Dorsolateral prefrontal cortex (tissue), 120 donors: ENCODE measurements at regions of chr9 and their contacts with region 1.

Region 1: DNA sequence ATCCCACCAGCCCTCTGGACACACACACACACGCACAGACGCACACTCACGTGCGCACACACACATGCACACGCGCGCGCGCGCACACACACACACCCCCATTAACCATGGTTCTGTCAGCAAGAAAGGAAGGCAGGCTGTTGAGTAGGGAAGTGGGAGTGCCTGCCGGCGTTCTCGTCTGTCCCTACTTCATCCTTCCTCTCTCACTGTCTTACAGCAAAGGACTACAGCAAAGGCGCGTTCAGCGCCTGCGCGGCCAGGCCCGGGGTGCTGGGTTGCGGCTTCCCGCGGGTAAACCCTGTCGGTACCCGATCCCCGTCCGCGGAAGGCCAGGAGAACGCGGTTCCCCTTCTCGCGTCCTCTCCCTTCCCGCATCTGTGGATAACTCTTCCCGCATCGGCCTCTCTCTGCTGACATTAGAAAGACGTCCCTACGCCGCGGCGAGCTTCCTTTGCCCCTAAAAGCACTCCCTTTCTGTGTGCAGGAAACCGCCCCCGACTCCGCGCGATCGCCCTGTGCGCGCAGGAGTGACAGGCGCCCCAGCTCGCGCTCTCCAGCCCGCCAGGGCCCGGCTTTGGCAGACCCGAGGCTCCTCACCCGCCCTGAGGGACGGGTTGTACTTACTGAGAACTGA is 219.2 kb downstream of the AGTPBP1 start:
- DNase-seq: peak in 9 of 10 donors; percentile 34 to 80 (median 61)
- H3K4me3 ChIP-seq: peak overlapping the region in 58 of 59 donors; percentile 17 to 68 (median 52)
- H3K27ac ChIP-seq: peak overlapping the region; percentile 59 to 100 (median 98)
- H3K27me3 ChIP-seq: no peaks in the 10 kb centered on the region
- CTCF ChIP-seq: no peak

Region 2: GRCh38 chr9:85024374-85024773 is 498.2 kb before region 1 on chr9:
- intact Hi-C with region 1: loop called in 1 of 2 experiments (anchors 10 kb)
- DNase-seq: peak in 3 of 10 donors; percentile 33 to 67 (median 46)
- H3K4me3 ChIP-seq: no peak overlapping the region
- H3K27ac ChIP-seq: peak overlapping the region in 50 of 59 donors; percentile 0 to 73 (median 47)
- H3K27me3 ChIP-seq: no peaks in the 10 kb centered on the region
- CTCF ChIP-seq: peak in 52 of 56 donors; percentile 17 to 73 (median 48)

Region 3: DNA sequence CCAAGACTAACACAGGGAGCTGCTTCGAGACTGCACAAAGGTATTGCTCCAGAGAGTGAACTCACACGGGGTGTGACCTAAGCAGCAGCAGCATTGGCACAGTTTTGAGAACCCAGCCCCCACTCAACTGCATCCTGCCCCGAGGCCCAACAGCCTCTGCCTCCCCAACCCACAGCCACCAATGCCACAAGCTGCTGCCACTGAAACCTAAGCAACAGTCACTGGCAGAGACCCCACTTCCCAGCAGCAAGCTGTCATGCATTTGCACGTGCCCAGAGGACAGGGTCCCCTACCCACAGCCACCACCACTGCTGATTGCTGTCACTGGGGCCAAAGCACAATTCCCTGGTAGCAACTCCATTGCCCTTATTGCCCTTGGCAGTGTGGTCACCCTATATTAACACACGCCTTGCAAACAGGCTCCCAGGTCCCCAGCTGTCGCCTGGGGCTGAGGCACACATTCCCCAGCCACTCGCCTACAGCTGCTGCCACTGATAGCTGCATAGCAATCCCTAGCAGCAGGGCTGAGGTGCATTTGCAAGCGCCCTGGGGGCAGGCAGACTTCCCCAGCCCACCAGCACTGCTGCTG is 78.2 kb after region 1 on chr9:
- intact Hi-C with region 1: loop called in 1 of 2 experiments (anchors 5 kb)
- DNase-seq: no peak
- H3K4me3 ChIP-seq: no peak overlapping the region
- H3K27ac ChIP-seq: peak overlapping the region in 32 of 59 donors; percentile 3 to 70 (median 21)
- H3K27me3 ChIP-seq: no peaks in the 10 kb centered on the region
- CTCF ChIP-seq: no peak

Region 4: DNA sequence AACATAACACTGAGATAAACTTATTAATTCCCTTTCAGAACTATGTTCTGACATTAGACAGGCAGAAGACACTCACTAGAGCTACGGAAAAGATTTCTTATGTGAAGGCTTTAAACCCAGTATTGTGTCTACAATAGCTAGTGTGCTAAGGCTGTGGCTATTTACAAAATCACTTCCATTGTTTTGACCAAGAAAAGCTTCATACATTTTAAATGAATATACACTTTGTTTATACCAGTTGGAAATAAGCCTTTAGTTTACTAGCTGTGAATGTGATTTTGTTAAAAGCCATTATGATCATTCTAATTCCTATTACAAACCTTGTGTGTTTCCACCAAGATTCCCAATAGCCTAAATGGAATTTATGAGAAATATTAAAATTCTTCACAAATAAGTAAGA is 136.1 kb after region 1 on chr9:
- intact Hi-C with region 1: loop called in 1 of 2 experiments (anchors 5 kb)
- DNase-seq: no peak
- H3K4me3 ChIP-seq: peak overlapping the region in 16 of 59 donors; percentile 1 to 30 (median 13)
- H3K27ac ChIP-seq: peak overlapping the region; percentile 11 to 97 (median 90)
- H3K27me3 ChIP-seq: no peaks in the 10 kb centered on the region
- CTCF ChIP-seq: peak in 3 of 56 donors; percentile 11 to 17 (median 13)